SK-N-SH (cell line): ENCODE measurements at regions of chr1 and their contacts with region 1.

Region 1: GRCh38 chr1:23098463-23099170 is 70.0 kb downstream of the LUZP1 start:
- DNase-seq: peak; percentile 63
- H3K4me3 ChIP-seq: peak overlapping the region in 1 of 2 experiments; percentile 25; a peak in 1 of 4 replicates
- H3K27ac ChIP-seq: peak overlapping the region in 1 of 2 experiments; percentile 82; a peak in 2 of 4 replicates
- H3K4me1 ChIP-seq: peaks cover 9 to 46% of the 10 kb centered on the region in 2 experiments
- H3K27me3 ChIP-seq: no peaks in the 10 kb centered on the region
- CTCF ChIP-seq: peak; percentile 91
- EP300 ChIP-seq: no peak
- RAD21 ChIP-seq: peak; percentile 97

Region 2: DNA sequence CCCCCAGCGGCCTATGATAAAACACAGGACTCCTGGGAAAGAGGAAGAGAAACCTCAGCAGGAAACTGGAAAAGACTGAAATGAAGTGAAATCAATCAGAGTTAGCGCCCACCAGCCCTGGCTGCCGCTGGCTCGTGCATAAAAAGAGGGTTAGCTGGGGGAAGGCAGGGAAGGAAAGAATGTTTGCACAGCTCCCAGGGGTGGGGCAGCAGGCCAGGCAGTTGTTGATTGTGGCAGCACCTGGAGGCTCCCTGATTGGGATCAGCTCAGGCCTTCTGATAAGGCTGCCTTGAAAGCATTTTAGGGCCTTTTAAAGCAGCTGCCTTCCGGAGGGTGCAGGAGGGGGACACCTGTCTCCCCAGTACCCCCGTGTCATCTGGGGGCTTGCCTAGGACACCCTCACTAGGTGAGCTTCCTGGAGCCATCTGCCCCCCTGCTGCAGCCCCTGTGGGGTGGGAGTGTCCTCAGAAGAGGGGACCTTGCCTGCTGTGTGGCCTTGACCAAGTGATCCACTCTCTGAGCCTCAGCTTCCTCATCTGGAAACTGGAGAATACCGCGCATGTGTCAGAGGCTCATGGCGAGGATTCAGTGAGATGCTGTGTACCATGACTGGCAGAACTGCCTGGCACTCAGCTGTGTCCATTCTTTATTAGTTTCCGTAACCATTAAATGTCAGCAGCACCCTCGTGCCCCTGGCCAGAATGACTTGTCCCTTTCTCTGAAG is 381.4 kb before region 1 on chr1:
- CTCF ChIA-PET with region 1: no interaction called
- POLR2A ChIA-PET with region 1: no interaction called
- DNase-seq: no peak
- H3K4me3 ChIP-seq: no peak overlapping the region
- H3K27ac ChIP-seq: peak overlapping the region in 1 of 2 experiments; percentile 2; a peak in 1 of 4 replicates
- H3K4me1 ChIP-seq: peaks cover 0 to 25% of the 10 kb centered on the region in 2 experiments; a peak in 1 of 4 replicates
- H3K27me3 ChIP-seq: no peaks in the 10 kb centered on the region
- CTCF ChIP-seq: no peak
- EP300 ChIP-seq: no peak; a peak in 1 of 4 replicates
- RAD21 ChIP-seq: no peak

Region 3: GRCh38 chr1:23081376-23081775 is 17.2 kb before region 1 on chr1:
- CTCF ChIA-PET with region 1: interaction called, 31 read pairs
- POLR2A ChIA-PET with region 1: no interaction called
- DNase-seq: no peak
- H3K4me3 ChIP-seq: no peak overlapping the region
- H3K27ac ChIP-seq: no peak overlapping the region
- H3K4me1 ChIP-seq: no peaks in the 10 kb centered on the region
- H3K27me3 ChIP-seq: no peaks in the 10 kb centered on the region
- CTCF ChIP-seq: peak; percentile 28; the same call in 1 of the 2 replicates
- EP300 ChIP-seq: no peak
- RAD21 ChIP-seq: no peak

Region 4: DNA sequence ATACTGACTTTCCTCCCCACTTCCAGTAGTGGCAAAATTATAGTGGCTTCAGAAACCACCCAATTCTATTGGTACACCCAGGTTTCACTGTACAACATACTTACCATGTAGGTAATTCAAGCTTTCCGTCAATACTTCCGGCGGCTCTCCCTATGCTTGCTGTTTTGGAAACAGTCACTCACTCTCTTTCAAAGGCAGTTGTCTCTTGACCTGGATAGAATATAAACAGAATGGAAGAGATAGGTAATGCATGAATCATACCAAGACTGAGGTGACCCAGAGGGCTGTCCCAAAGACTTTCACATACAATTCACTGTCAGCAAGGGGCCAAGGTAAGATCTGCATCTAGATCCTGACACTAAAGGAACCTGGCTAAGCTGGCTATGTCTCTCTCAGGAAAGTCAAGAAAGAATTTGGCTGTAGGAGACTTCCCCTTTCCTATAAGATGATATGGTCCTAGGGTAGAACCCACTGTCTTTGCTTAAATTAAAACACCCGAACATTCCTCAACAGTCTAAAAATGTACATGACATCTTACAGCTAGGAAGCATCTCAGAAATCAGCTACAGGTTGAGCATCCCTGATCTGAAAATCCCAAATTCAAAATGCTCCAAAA is 10.4 kb after region 1 on chr1:
- CTCF ChIA-PET with region 1: interaction called, 45 read pairs
- POLR2A ChIA-PET with region 1: no interaction called
- DNase-seq: no peak
- H3K4me3 ChIP-seq: no peak overlapping the region
- H3K27ac ChIP-seq: no peak overlapping the region
- H3K4me1 ChIP-seq: peaks cover 0 to 5% of the 10 kb centered on the region in 2 experiments; a peak in 2 of 4 replicates
- H3K27me3 ChIP-seq: no peaks in the 10 kb centered on the region
- CTCF ChIP-seq: no peak
- EP300 ChIP-seq: no peak
- RAD21 ChIP-seq: no peak

Region 5: GRCh38 chr1:23168457-23169194 is 70.0 kb after region 1 on chr1 and contains the start of gene LUZP1:
- CTCF ChIA-PET with region 1: interaction called, 16 read pairs
- POLR2A ChIA-PET with region 1: no interaction called
- DNase-seq: peak; percentile 93
- H3K4me3 ChIP-seq: peak within 1 kb of the TSS; percentile 71 to 96
- H3K27ac ChIP-seq: peak within 1 kb of the TSS; percentile 80 to 94
- H3K4me1 ChIP-seq: peaks cover 10 to 16% of the 10 kb centered on the region in 2 experiments
- H3K27me3 ChIP-seq: no peaks in the 10 kb centered on the region
- CTCF ChIP-seq: no peak
- EP300 ChIP-seq: no peak
- RAD21 ChIP-seq: no peak
- polyA plus RNA-seq, gene LUZP1: 8.9 and 12.5 TPM in 2 replicates

Region 6: GRCh38 chr1:23191199-23191598 is 92.6 kb after region 1 on chr1:
- CTCF ChIA-PET with region 1: interaction called, 419 read pairs
- POLR2A ChIA-PET with region 1: no interaction called
- DNase-seq: no peak
- H3K4me3 ChIP-seq: no peak overlapping the region
- H3K27ac ChIP-seq: no peak overlapping the region
- H3K4me1 ChIP-seq: peaks cover 4 to 12% of the 10 kb centered on the region in 2 experiments; a peak in 3 of 4 replicates
- H3K27me3 ChIP-seq: no peaks in the 10 kb centered on the region
- CTCF ChIP-seq: no peak
- EP300 ChIP-seq: no peak
- RAD21 ChIP-seq: no peak